PC-9 (cell line): ENCODE measurements at regions of chr6 and their contacts with region 1.

Region 1: DNA sequence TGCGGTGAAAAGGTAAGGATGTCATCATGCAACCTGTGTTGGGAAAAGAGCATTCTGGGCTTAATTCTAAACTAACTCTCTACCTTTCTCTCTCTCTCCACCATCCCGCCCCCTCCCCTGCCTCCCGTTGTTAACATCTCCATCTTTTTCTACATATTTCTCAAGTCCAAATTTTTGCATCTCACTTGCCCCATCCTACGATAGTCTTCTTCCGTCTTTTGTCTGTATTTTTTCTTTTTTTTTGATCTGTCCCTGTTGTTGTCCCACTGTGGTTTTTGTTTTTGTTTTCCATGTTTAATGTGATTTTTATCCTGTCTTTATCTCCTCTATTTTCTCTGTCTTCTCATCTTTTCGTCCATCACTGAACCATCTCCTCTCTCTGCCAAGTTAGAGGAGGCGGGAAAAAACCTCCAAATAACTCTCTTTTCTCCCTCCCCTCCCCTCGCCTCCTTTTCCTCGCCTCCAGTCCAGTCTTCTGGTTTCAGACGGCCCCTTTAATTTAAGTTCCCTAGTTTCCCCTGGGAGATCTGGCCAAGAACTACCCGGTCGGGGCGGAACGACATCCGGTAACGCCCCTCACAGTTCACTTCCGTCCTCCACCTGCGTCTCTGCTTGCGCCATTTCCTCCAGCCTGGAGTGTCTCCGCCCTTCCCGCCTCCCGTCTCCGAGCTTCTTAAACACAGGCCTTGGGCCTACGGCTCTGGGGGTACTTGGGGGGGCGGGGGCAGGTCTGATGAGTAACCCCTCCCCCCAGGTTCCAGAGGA is at the start of gene NFKBIL1:
- DNase-seq: peak; percentile 88 to 89
- H3K4me3 ChIP-seq: peak within 1 kb of the TSS; percentile 78
- H3K27ac ChIP-seq: peak within 1 kb of the TSS; percentile 89
- H3K4me1 ChIP-seq: peaks cover 18% of the 10 kb centered on the region
- H3K27me3 ChIP-seq: no peaks in the 10 kb centered on the region
- CTCF ChIP-seq: peak; percentile 23; the same call in 1 of the 2 replicates
- total RNA-seq, gene NFKBIL1: 26.1 and 38.3 TPM in 2 replicates

Region 2: DNA sequence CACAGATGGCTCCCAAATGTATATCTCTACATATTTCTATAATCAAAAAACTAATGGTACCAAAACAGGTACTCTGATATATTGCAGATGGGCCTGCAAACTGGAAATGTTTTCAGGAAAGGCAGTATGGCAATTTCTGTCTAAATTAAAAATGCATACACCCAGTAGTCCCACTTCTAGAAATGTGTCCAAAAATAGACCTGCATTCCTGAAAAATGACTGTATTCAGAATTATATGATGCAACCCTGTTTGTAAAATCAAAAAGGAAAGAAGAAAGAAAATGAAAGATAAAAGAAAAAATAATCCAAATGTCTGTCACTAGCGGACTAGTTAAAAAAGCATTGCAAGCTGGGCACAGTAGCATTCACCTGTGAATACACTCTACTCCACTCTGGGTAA is 62.1 kb before region 1 on chr6:
- CTCF ChIA-PET with region 1: interaction called, 13 read pairs
- POLR2A ChIA-PET with region 1: no interaction called
- intact Hi-C with region 1: no loop called
- DNase-seq: no peak
- H3K4me3 ChIP-seq: no peak overlapping the region
- H3K27ac ChIP-seq: no peak overlapping the region
- H3K4me1 ChIP-seq: 0 out of 2 replicates have a peak, but pooled peaks cover 8% of the 10 kb centered on the region
- H3K27me3 ChIP-seq: no peaks in the 10 kb centered on the region
- CTCF ChIP-seq: no peak

Region 3: DNA sequence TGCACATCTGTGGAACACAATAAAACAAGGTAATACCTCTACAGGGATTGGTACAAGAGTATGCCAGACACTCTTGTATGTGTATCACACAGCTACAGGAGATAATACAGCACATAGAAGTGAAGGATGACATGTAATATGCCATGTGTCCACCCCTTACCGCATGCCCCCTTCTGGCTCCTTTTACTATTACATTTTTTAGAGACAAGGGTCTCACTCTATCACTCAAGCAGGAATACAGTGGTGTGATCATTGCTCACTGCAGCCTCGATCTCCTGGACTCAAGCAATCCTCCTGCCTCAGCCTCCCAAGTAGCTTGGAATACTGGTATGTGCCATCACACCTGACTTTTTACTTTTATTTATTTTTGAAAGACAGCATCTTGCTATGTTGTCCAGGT is 49.9 kb after region 1 on chr6:
- CTCF ChIA-PET with region 1: interaction called, 30 read pairs
- POLR2A ChIA-PET with region 1: interaction called, 6 read pairs
- intact Hi-C with region 1: loop called (anchors 1 kb)
- DNase-seq: no peak
- H3K4me3 ChIP-seq: no peak overlapping the region
- H3K27ac ChIP-seq: no peak overlapping the region
- H3K4me1 ChIP-seq: no peaks in the 10 kb centered on the region
- H3K27me3 ChIP-seq: no peaks in the 10 kb centered on the region
- CTCF ChIP-seq: peak; percentile 53

Region 4: GRCh38 chr6:31660381-31661261 is 113.5 kb after region 1 on chr6 and contains the start of gene C6orf47:
- CTCF ChIA-PET with region 1: no interaction called
- POLR2A ChIA-PET with region 1: interaction called, 18 read pairs
- intact Hi-C with region 1: loop called (anchors 2 kb)
- DNase-seq: peak; percentile 66 to 82
- H3K4me3 ChIP-seq: peak within 1 kb of the TSS; percentile 79
- H3K27ac ChIP-seq: peak within 1 kb of the TSS; percentile 71
- H3K4me1 ChIP-seq: peaks cover 26% of the 10 kb centered on the region
- H3K27me3 ChIP-seq: no peaks in the 10 kb centered on the region
- CTCF ChIP-seq: no peak
- total RNA-seq, gene C6orf47: 17.2 and 17.8 TPM in 2 replicates

Region 5: DNA sequence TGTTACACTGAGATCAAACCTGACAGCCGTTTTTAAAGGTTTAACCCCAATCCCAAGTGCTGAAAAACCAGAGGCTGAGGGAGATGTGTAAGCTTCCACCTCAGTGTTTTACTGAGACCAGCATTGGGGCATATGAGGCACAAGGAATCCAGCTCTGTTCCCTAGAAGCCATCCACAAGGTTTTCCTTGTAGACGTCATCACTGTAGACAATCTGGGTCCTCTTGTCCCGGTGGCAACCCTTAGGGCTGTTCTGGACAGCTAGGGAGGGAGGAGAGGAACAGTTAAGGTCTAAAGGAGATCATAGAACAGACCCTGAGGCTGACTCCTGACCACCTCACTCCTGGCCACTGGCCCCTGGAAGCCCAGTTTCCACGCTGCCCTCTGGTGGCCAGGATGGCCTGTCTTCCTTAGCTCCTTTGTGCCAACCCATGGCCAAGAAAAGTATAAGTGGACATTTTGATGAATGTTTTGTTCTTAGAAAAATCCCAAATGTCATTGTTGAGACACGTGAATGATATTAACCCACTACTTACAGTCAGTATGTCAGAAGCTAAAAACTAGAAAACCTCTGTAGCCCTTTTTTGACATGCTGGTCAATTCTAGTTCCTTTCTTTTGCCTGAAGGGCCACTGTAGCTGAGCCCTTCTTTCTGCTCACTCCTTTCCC is 405.1 kb after region 1 on chr6:
- CTCF ChIA-PET with region 1: no interaction called
- POLR2A ChIA-PET with region 1: no interaction called
- intact Hi-C with region 1: loop called (anchors 1 kb)
- DNase-seq: peak; percentile 36 to 67
- H3K4me3 ChIP-seq: no peak overlapping the region
- H3K27ac ChIP-seq: no peak overlapping the region; the same call in 1 of the 2 replicates
- H3K4me1 ChIP-seq: peaks cover 24% of the 10 kb centered on the region
- H3K27me3 ChIP-seq: no peaks in the 10 kb centered on the region
- CTCF ChIP-seq: peak; percentile 84

Region 6: DNA sequence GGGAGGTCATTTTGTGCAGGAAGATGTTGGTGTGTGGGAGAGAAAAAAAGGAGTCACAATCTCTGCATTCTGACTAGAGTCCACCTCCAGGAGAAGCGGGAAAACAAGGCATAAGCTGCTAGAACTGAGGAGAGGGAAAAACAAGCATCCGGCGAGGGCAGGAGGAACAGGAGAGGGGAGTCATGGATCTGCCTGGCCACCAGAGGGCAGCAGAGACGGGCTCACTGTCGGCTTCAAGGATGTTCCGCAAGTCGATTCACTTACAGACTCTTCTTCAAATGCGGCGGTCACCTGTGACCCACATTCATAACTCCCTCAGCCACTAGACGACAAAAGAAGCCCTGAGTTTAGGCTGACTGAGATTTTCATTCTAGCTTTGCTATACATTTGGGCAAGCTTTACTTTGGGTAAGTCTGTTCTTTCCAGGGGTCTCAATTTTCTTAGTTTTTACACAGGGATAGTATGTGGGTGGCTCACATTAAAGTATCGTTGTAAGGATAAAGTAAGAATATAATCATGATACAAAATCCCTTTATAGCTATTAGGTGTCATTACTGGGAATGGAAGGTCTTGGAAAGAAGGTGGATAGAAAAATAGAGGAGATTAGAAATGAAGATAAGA is 866.4 kb after region 1 on chr6:
- CTCF ChIA-PET with region 1: no interaction called
- POLR2A ChIA-PET with region 1: no interaction called
- intact Hi-C with region 1: loop called (anchors 2 kb)
- DNase-seq: peak; percentile 38 to 75
- H3K4me3 ChIP-seq: no peak overlapping the region
- H3K27ac ChIP-seq: no peak overlapping the region
- H3K4me1 ChIP-seq: no peaks in the 10 kb centered on the region
- H3K27me3 ChIP-seq: peaks cover 44% of the 10 kb centered on the region
- CTCF ChIP-seq: peak; percentile 88